GM13976 (cell line): ENCODE measurements at regions of chr4 and their contacts with region 1.

Region 1: GRCh38 chr4:84503495-84504437 is 4.7 kb upstream of the NKX6-1 start:
- DNase-seq: peak; percentile 58
- CTCF ChIP-seq: peak; percentile 51

Region 2: DNA sequence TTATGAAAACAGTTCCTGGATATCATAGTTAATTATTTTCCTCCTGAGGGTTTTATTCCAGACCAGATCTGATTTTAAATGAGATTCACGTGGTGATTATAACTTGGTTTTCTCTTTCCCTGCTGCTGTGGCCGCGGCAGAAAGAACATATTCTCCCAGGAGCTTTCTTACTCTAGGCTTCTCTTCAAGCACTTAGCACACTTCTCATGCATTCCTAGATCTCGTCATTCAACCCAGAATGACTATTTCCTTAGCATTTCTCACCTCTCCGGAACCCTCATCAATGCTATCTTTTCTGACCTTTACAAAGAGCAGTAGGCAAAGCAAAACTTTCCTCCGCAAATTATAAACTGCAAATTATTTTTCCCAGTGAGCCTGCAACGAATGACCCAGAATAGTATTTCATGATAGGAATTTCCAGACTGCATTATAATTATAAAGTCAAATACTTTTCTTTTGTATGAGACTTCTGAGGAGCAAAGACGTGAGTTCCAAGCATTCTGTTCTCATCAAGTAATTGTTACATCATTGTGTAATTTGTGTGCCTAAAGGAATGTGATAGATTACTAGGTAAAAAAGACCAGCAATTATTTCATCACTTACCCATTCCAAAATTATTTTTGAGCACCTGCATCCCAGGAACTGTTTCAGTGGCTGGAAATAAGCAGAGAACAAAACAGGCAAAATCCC is 844.8 kb before region 1 on chr4:
- in situ Hi-C with region 1: loop called (anchors 25 kb)
- DNase-seq: no peak
- CTCF ChIP-seq: no peak

Region 3: GRCh38 chr4:83810428-83810827 is 693.3 kb before region 1 on chr4:
- in situ Hi-C with region 1: no loop called
- DNase-seq: no peak
- CTCF ChIP-seq: no peak

Region 4: DNA sequence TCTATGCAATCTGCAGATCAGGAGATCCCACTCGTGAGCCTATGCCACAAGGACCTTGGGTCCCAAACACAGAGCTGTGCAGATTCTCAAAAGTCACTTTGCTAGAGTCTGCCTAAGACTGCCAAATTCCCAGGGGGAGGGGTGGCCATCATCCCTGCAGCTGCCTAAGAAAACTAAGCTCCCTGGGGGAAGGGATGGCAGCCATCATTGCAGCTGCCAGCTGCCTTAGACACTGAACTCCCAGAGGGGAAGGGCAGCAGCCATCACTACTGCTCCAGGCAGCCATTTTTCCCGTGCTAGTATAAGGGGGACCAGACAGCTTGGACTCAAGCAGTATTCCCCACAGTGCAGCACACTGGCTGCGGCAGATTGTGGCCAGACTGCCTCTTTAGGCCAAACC is 161.6 kb before region 1 on chr4:
- in situ Hi-C with region 1: no loop called
- DNase-seq: no peak
- CTCF ChIP-seq: no peak

Region 5: GRCh38 chr4:84691170-84691691 is 187.5 kb after region 1 on chr4:
- in situ Hi-C with region 1: no loop called
- DNase-seq: no peak
- CTCF ChIP-seq: no peak